Activated B cell treated with CpG ODN at 0.5 μM for 24 hours (primary cell): ENCODE measurements at regions of chr1 and their contacts with region 1.

Region 1: GRCh38 chr1:154607609-154608396 is at the start of gene ADAR:
- DNase-seq: peak; percentile 80
- ATAC-seq: peak; percentile 91
- H3K4me3 Mint-ChIP-seq: peak within 1 kb of the TSS; percentile 89
- H3K27ac Mint-ChIP-seq: peak within 1 kb of the TSS; percentile 90
- H3K4me1 Mint-ChIP-seq: peaks cover 73% of the 10 kb centered on the region
- H3K27me3 Mint-ChIP-seq: no peaks in the 10 kb centered on the region
- CTCF ChIP-seq: no peak
- total RNA-seq, gene ADAR: 209 and 216 TPM in 2 replicates

Region 2: GRCh38 chr1:154619181-154619948 is 11.6 kb after region 1 on chr1:
- CTCF ChIA-PET with region 1: no interaction called
- POLR2A ChIA-PET with region 1: interaction called, 10 read pairs
- intact Hi-C with region 1: no loop called
- DNase-seq: no peak
- ATAC-seq: no peak
- H3K4me3 Mint-ChIP-seq: no peak overlapping the region
- H3K27ac Mint-ChIP-seq: peak overlapping the region; percentile 27
- H3K4me1 Mint-ChIP-seq: peaks cover 19% of the 10 kb centered on the region
- H3K27me3 Mint-ChIP-seq: no peaks in the 10 kb centered on the region
- CTCF ChIP-seq: no peak

Region 3: GRCh38 chr1:154627257-154628120 is 19.7 kb after region 1 on chr1:
- CTCF ChIA-PET with region 1: no interaction called
- POLR2A ChIA-PET with region 1: interaction called, 15 read pairs
- intact Hi-C with region 1: loop called (anchors 1 kb)
- DNase-seq: peak; percentile 87
- ATAC-seq: peak; percentile 77
- H3K4me3 Mint-ChIP-seq: peak overlapping the region; percentile 93
- H3K27ac Mint-ChIP-seq: peak overlapping the region; percentile 99
- H3K4me1 Mint-ChIP-seq: peaks cover 32% of the 10 kb centered on the region
- H3K27me3 Mint-ChIP-seq: peaks cover 3% of the 10 kb centered on the region
- CTCF ChIP-seq: no peak

Region 4: GRCh38 chr1:154870115-154870571 is 262.3 kb after region 1 on chr1 and contains the start of gene KCNN3:
- CTCF ChIA-PET with region 1: no interaction called
- POLR2A ChIA-PET with region 1: interaction called, 4 read pairs
- intact Hi-C with region 1: loop called (anchors 5 kb)
- DNase-seq: peak; percentile 88
- ATAC-seq: peak; percentile 99
- H3K4me3 Mint-ChIP-seq: peak within 1 kb of the TSS; percentile 44
- H3K27ac Mint-ChIP-seq: no peak within 1 kb of the TSS
- H3K4me1 Mint-ChIP-seq: peaks cover 47% of the 10 kb centered on the region
- H3K27me3 Mint-ChIP-seq: peaks cover 34% of the 10 kb centered on the region
- CTCF ChIP-seq: no peak
- total RNA-seq, gene KCNN3: 0.44 and 1.1 TPM in 2 replicates